ENCODE measurements at regions of chr2 and their contacts with region 1.

Region 1: GRCh38 chr2:219160186-219161017 is at the start of gene NHEJ1:
- DNase-seq: peak; percentile 97 to 98
- H3K4me3 ChIP-seq: peak within 1 kb of the TSS; percentile 63 to 65
- H3K27ac ChIP-seq: peak within 1 kb of the TSS; percentile 96
- H3K4me1 ChIP-seq: peaks cover 20% of the 10 kb centered on the region
- H3K27me3 ChIP-seq: no peaks in the 10 kb centered on the region
- CTCF ChIP-seq: peak; percentile 93 to 100 (median 97)
- POLR2A ChIP-seq: peak in 1 of 2 donors; percentile 46
- total RNA-seq, gene NHEJ1: 17.7 TPM

Region 2: DNA sequence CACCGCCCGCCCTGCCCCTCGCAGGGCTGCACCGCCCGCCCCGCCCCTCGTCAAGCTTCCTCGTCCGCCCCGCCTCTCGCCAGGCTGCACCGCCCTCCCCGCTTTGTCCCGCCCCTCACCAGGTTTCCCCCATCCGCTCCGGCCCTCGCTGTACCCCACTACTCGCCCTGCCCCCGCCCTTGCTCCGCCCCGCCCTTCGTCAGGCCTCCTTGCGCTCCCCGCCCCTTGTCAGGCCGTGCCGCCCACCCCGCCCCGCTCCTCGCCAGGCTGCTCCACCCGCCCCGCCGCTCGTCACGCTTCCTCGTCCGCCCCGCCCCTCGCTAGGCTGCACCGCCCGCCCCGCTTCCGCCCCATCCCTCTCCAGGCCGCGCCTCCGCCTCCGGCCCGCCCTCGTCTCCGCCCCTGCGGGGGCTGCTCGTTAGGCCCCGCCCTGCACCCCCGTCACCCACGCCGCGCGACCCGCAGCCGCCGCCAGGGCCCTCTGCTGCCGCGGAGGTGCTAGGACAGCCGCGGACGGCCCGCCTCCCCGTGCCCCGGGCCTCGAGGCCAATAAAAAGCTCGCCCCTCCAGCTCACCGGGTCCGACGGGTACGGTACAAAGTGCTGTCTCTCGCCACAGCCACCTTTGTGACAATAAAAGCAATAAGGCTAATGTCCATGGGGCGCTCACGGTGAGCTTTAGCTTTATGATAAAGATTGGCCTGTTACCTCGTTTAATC is 227.9 kb after region 1 on chr2:
- intact Hi-C with region 1: loop called (anchors 10 kb)
- DNase-seq: peak in 1 of 2 donors; percentile 97
- H3K4me3 ChIP-seq: peak overlapping the region; percentile 43 to 94
- H3K27ac ChIP-seq: peak overlapping the region; percentile 94
- H3K4me1 ChIP-seq: peaks cover 33% of the 10 kb centered on the region
- H3K27me3 ChIP-seq: no peaks in the 10 kb centered on the region
- CTCF ChIP-seq: peak; percentile 56 to 74 (median 68)
- POLR2A ChIP-seq: no peak

Region 3: DNA sequence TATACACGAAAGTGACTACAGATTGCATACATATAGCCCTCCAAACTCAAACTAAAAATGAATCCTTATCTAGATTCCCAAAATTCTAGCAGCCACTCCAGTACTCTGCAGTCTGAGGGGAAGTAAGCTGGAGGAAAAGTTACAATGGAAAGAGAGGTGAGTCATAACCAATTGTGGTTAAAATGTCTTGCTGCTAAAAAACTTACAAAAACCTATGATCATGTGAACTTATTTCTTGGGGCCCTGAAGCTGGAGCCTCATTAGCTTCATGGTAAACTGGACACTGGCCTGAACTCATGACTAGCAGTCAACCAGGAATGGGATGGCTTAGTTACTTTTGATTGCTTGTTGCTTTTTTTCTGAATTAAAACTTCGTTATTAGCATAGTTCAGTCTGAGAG is 642.9 kb after region 1 on chr2:
- intact Hi-C with region 1: no loop called
- DNase-seq: no peak
- H3K4me3 ChIP-seq: no peak overlapping the region
- H3K27ac ChIP-seq: no peak overlapping the region
- H3K4me1 ChIP-seq: no peaks in the 10 kb centered on the region
- H3K27me3 ChIP-seq: no peaks in the 10 kb centered on the region
- CTCF ChIP-seq: no peak
- POLR2A ChIP-seq: no peak